ENCODE measurements at regions of chr1 and their contacts with region 1.

Region 1: GRCh38 chr1:23344111-23344986 is at the start of gene HNRNPR:
- DNase-seq: peak; percentile 96 to 99
- H3K4me3 ChIP-seq: peak within 1 kb of the TSS; percentile 68
- H3K27ac ChIP-seq: peak within 1 kb of the TSS; percentile 81
- H3K4me1 ChIP-seq: peaks cover 39% of the 10 kb centered on the region
- H3K27me3 ChIP-seq: no peaks in the 10 kb centered on the region
- CTCF ChIP-seq: no peak
- total RNA-seq, gene HNRNPR: 149 and 198 TPM in 2 replicates

Region 2: GRCh38 chr1:23367791-23368561 is 23.6 kb after region 1 on chr1:
- CTCF ChIA-PET with region 1: interaction called, 11 read pairs
- POLR2A ChIA-PET with region 1: interaction called, 22 read pairs
- intact Hi-C with region 1: loop called (anchors 1 kb)
- DNase-seq: peak; percentile 95 to 99
- H3K4me3 ChIP-seq: peak overlapping the region; percentile 96
- H3K27ac ChIP-seq: peak overlapping the region; percentile 84
- H3K4me1 ChIP-seq: peaks cover 37% of the 10 kb centered on the region
- H3K27me3 ChIP-seq: no peaks in the 10 kb centered on the region
- CTCF ChIP-seq: 0 out of 2 replicates have a peak, but pooled peaks have one; percentile 22

Region 3: DNA sequence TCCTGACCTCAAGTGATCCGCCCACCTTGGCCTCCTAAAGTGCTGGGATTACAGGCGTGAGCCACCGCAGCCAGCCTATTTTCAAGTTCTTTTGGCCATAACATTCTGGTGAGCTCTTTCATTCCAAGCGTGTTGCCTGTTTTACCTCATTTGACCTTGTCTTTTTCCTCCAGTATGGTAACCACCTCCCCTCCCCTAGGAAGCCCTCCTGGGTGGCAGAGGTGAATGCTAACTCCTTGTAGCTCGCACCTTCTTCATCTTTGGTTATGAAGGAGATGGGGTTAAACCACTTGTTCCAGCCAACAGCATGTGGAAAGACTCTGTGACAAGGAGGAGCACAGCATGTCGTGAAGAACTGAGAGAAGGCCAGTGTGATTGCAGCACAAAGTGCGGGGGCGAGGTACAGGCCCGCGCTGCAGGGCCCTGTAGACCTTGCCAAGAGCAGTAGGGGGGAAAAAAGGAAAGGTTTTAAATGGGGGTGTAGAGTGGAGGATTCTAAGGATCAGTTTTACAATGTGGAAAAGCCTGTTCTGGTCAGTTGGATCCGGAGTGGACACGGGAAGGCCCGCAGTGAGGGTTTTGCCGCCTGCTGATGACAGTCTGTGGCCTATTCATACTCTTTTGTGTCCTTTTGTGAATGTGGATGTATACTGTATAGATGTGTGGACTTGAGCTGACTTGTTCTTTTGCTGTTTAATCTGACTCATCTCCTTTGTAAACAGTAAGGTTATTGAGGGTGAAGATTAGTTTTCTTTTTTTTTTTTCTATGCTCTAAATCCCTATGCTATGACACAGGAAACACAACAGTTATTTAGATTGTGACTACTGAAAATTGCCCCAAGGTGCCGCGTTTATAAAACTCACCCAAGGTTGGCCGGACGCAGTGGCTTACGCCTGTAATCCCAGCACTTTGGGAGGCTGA is 32.8 kb after region 1 on chr1:
- CTCF ChIA-PET with region 1: interaction called, 10 read pairs
- POLR2A ChIA-PET with region 1: interaction called, 3 read pairs
- intact Hi-C with region 1: no loop called
- DNase-seq: peak; percentile 71 to 95
- H3K4me3 ChIP-seq: no peak overlapping the region
- H3K27ac ChIP-seq: peak overlapping the region; percentile 70
- H3K4me1 ChIP-seq: peaks cover 8% of the 10 kb centered on the region
- H3K27me3 ChIP-seq: no peaks in the 10 kb centered on the region
- CTCF ChIP-seq: no peak

Region 4: GRCh38 chr1:23478896-23479665 is 134.7 kb after region 1 on chr1:
- CTCF ChIA-PET with region 1: no interaction called
- POLR2A ChIA-PET with region 1: no interaction called
- intact Hi-C with region 1: loop called (anchors 2 kb)
- DNase-seq: peak in 1 of 2 experiments; percentile 80
- H3K4me3 ChIP-seq: no peak overlapping the region
- H3K27ac ChIP-seq: peak overlapping the region; percentile 64
- H3K4me1 ChIP-seq: peaks cover 55% of the 10 kb centered on the region
- H3K27me3 ChIP-seq: no peaks in the 10 kb centered on the region
- CTCF ChIP-seq: no peak

Measured in PC-9 (cell line).